ENCODE measurements at regions of chr5 and their contacts with region 1.

Region 1: DNA sequence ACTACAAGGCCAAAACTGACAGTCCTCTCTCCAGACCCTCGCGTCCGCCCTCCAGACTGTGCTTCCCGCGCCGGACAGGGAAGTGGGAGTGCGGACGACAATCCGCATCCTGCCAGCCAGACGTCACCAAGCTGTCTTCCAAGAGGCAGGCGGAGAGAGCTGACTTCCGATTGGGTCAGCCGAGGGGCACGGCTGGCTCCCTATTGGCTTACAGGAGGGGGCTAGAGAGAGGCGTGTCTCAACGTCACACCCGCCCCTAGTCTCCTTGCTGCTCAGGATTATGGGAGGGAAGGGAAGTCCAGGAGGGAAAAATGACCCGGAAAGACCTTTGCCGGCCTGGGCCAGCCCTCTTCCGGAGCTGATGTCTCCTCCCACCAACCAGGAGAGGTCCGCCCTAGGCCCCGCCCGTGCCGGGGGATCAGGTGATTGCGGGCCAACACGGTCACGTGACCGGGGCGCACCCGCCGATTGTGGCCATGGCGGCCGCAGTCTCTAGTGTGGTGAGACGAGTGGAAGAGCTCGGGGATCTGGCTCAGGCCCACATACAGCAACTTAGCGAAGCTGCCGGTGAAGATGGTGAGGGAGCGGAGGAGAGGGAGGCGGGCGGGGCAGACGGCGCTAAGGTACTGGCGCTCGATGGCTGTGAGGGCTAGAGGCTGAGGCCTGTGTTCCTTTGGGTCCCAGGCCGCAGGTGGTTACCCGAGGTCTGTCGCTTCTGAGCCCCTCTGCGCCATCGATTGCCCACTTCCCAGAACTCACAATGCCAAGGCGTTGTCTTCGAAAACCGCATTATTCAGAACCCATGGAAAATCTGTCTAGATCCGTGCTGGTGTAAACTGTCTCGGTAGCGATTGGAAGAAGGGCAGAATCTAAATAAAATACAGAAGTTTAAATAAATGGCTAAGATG is at the start of gene RIMOC1:
- DNase-seq: peak; percentile 98 to 100 (median 99)

Region 2: GRCh38 chr5:41869739-41870626 is 34.2 kb before region 1 on chr5 and contains the start of gene OXCT1:
- intact Hi-C with region 1: loop called (anchors 2 kb)
- DNase-seq: peak; percentile 57 to 93 (median 82)